ENCODE measurements at regions of chr22 and their contacts with region 1.

Region 1: GRCh38 chr22:49827853-49828598 is at the start of gene BRD1:
- DNase-seq: peak; percentile 90
- H3K4me3 Mint-ChIP-seq: peak within 1 kb of the TSS; percentile 93
- H3K27ac Mint-ChIP-seq: peak within 1 kb of the TSS; percentile 89
- H3K4me1 Mint-ChIP-seq: peaks cover 42% of the 10 kb centered on the region
- H3K27me3 Mint-ChIP-seq: peaks cover 3% of the 10 kb centered on the region
- total RNA-seq, gene BRD1: 36.2 and 43.2 TPM in 2 replicates

Region 2: DNA sequence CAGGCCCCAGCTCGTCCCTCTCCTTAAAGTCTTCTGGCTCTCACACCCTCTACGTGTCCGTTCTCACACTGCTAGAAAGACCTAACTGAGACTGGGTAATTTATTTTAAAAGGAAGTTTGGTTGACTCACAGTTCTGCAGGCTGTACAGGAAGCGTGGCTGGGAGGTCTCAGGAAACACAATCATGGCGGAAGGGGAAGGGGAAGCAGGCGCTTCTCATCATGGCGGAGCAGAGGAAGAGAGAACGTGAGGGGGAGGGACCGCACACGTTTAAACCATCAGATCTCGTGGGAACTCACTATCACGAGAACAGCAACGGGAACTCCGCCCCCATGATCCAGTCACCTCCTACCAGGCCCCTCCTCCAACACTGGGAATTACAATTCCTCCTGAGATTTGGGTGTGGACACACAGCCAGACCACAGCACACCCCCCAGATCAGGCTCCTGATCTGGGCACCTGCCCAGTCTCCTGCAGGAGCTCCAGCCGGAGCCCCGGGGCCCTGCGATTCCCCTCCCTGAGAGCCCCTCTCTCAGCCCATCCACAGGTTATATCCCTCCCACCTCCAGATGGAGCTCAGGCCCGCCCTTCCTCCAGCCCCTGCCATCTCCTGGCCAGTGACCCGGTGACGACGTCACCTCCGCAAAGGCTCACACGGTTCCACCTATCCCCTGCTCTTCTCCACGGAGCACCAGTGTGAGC is 170.6 kb before region 1 on chr22:
- intact Hi-C with region 1: no loop called
- DNase-seq: peak; percentile 92
- H3K4me3 Mint-ChIP-seq: peak overlapping the region; percentile 89
- H3K27ac Mint-ChIP-seq: peak overlapping the region; percentile 77
- H3K4me1 Mint-ChIP-seq: peaks cover 10% of the 10 kb centered on the region
- H3K27me3 Mint-ChIP-seq: no peaks in the 10 kb centered on the region

Region 3: GRCh38 chr22:49735411-49735900 is 92.6 kb before region 1 on chr22:
- intact Hi-C with region 1: no loop called
- DNase-seq: peak; percentile 70
- H3K4me3 Mint-ChIP-seq: no peak overlapping the region
- H3K27ac Mint-ChIP-seq: no peak overlapping the region
- H3K4me1 Mint-ChIP-seq: peaks cover 2% of the 10 kb centered on the region
- H3K27me3 Mint-ChIP-seq: peaks cover 15% of the 10 kb centered on the region

Region 4: DNA sequence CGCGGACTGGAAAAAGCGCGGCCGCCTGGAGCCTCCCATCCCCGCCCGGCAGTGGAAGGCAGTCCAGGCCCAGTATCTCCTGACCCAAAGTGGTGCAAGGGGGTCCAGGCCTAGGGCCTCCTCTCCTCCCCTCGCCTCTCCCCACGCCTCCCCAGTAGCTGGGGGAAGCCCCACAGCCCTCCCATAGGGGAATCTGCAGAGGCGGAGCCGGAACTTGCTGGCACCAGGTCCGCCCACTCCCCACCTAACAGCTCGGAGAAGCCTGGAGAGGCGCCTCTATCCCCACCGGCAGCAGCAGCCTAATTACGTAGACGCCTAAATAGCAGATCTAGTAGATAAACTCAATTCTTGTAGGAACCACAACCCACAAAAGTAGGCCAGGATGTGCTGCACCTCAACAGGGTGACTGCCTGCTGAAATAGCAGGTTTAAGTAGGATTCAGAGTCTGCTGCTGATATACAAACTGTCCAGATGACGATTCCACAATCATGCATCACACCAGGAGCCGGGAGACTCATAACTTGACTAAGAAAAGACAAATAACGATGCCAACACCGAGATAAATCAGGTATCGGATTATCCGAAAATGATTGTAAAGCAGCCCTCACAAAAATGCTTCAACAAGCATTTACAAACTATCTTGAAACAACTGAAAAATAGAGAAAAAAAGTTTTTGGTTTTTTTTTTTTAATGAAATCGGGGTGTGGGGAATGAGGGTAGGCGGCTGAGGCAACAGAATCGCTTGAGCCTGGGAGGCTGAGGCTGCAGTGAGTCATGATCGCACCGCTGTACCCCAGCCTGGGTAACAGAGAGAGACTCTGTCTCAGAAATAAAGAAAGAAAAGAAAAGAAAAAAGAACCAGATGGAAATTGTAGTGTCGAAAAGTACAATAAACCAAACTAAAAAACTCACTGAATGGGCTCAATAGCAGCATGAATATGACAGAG is 11.0 kb after region 1 on chr22:
- intact Hi-C with region 1: loop called (anchors 1 kb)
- DNase-seq: peak; percentile 96
- H3K4me3 Mint-ChIP-seq: peak overlapping the region; percentile 90
- H3K27ac Mint-ChIP-seq: peak overlapping the region; percentile 96
- H3K4me1 Mint-ChIP-seq: peaks cover 26% of the 10 kb centered on the region
- H3K27me3 Mint-ChIP-seq: peaks cover 2% of the 10 kb centered on the region

Region 5: GRCh38 chr22:49867303-49868265 is 39.6 kb after region 1 on chr22:
- intact Hi-C with region 1: loop called (anchors 5 kb)
- DNase-seq: peak; percentile 62
- H3K4me3 Mint-ChIP-seq: peak overlapping the region; percentile 54
- H3K27ac Mint-ChIP-seq: peak overlapping the region; percentile 85
- H3K4me1 Mint-ChIP-seq: peaks cover 41% of the 10 kb centered on the region
- H3K27me3 Mint-ChIP-seq: no peaks in the 10 kb centered on the region

Measured in activated CD4-positive, alpha-beta T cell treated with anti-CD3 and anti-CD28 coated beads, Interleukin-2, amount 10 ng/mL, durations not matched to agents 24 days and 14 days (primary cell).